Right ventricle myocardium inferior (tissue), 1 donor: ENCODE measurements at regions of chr20 and their contacts with region 1.

Region 1: GRCh38 chr20:8545212-8545611 is 413.1 kb downstream of the PLCB1 start:
- DNase-seq: no peak
- ATAC-seq: peak; percentile 37

Region 2: GRCh38 chr20:8664778-8665177 is 119.6 kb after region 1 on chr20:
- intact Hi-C with region 1: loop called (anchors 5 kb)
- DNase-seq: no peak
- ATAC-seq: no peak